Transverse colon (tissue), 4 donors: ENCODE measurements at regions of chr6 and their contacts with region 1.

Region 1: GRCh38 chr6:9532571-9533557 is 882.0 kb downstream of the TFAP2A start:
- DNase-seq: no peak
- H3K4me3 ChIP-seq: no peak overlapping the region
- H3K27ac ChIP-seq: no peak overlapping the region
- H3K4me1 ChIP-seq: no peaks in the 10 kb centered on the region
- H3K27me3 ChIP-seq: no peaks in the 10 kb centered on the region
- CTCF ChIP-seq: no peak
- EP300 ChIP-seq: no peak
- POLR2A ChIP-seq: no peak

Region 2: DNA sequence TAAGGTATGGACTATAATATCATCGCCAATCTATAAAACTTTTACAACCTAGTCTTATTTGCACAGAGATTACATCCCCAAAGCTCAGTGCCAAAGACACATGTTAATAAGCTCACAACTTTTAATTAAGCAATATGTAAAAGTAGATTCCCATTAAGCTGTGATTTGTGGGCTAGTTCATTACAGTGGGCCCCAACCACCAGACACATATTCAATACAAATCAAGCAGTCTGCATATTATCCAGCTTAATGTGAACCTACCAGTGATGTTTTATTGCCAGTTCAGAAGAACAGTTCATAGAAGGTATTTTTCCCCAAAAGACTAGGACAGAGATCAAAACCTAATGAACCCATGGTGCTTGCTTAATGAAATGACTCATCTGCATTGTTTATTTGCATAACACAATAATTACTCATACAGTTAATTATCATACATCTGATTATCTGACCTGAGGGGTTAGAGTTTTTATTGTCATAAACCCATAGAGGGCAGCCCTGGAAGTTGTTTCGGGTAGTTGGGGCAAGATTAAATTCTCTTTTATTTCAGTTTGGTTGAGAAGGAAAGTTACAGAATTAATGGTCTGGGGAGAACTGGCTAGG is 51.0 kb after region 1 on chr6:
- in situ Hi-C with region 1: no loop called
- intact Hi-C with region 1: loop called (anchors 2 kb)
- DNase-seq: no peak
- H3K4me3 ChIP-seq: no peak overlapping the region
- H3K27ac ChIP-seq: no peak overlapping the region
- H3K4me1 ChIP-seq: no peaks in the 10 kb centered on the region
- H3K27me3 ChIP-seq: no peaks in the 10 kb centered on the region
- CTCF ChIP-seq: no peak
- EP300 ChIP-seq: no peak
- POLR2A ChIP-seq: no peak